Panc1 (cell line): ENCODE measurements at regions of chr2 and their contacts with region 1.

Region 1: DNA sequence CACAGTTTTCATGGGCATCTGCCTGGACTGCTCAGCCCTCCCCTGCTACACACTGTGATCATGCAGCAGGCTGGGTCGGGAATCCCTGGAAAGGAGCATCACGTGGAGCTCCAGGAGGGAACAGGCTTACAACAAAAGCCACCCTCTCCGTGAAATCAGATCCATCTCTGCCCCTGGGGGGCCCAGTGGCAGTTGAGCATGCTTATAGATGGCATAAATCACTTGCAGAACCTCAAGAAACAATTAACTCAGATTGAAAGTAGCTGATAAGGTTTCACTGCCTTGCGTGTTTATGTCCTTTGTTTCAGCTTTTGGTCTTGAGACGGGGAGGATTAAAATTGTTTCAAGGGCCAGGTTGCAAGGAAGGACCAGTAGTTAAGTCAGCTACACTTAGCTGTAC is 354.8 kb upstream of the MEIS1 start:
- DNase-seq: no peak
- ATAC-seq: no peak
- H3K4me3 ChIP-seq: no peak overlapping the region
- H3K27ac ChIP-seq: no peak overlapping the region
- H3K4me1 ChIP-seq: no peaks in the 10 kb centered on the region
- H3K27me3 ChIP-seq: no peaks in the 10 kb centered on the region; the same call in 1 of the 2 replicates
- CTCF ChIP-seq: no peak

Region 2: GRCh38 chr2:66066032-66066431 is 14.1 kb before region 1 on chr2:
- CTCF ChIA-PET with region 1: no interaction called
- POLR2A ChIA-PET with region 1: no interaction called
- in situ Hi-C with region 1: no loop called
- intact Hi-C with region 1: no loop called
- DNase-seq: no peak
- ATAC-seq: no peak
- H3K4me3 ChIP-seq: no peak overlapping the region
- H3K27ac ChIP-seq: no peak overlapping the region
- H3K4me1 ChIP-seq: no peaks in the 10 kb centered on the region
- H3K27me3 ChIP-seq: no peaks in the 10 kb centered on the region; the same call in none of the 2 replicates
- CTCF ChIP-seq: no peak

Region 3: GRCh38 chr2:66239655-66240054 is 159.5 kb after region 1 on chr2:
- CTCF ChIA-PET with region 1: no interaction called
- POLR2A ChIA-PET with region 1: no interaction called
- in situ Hi-C with region 1: no loop called
- intact Hi-C with region 1: loop called (anchors 10 kb)
- DNase-seq: no peak
- ATAC-seq: no peak
- H3K4me3 ChIP-seq: no peak overlapping the region
- H3K27ac ChIP-seq: no peak overlapping the region
- H3K4me1 ChIP-seq: no peaks in the 10 kb centered on the region
- H3K27me3 ChIP-seq: no peaks in the 10 kb centered on the region; the same call in none of the 2 replicates
- CTCF ChIP-seq: no peak